ENCODE measurements at regions of chr11 and their contacts with region 1.

Region 1: GRCh38 chr11:68584097-68584496 is 100.2 kb upstream of the GAL start:
- DNase-seq: no peak
- H3K4me3 ChIP-seq: no peak overlapping the region
- H3K27me3 ChIP-seq: no peaks in the 10 kb centered on the region
- CTCF ChIP-seq: peak; percentile 55

Region 2: DNA sequence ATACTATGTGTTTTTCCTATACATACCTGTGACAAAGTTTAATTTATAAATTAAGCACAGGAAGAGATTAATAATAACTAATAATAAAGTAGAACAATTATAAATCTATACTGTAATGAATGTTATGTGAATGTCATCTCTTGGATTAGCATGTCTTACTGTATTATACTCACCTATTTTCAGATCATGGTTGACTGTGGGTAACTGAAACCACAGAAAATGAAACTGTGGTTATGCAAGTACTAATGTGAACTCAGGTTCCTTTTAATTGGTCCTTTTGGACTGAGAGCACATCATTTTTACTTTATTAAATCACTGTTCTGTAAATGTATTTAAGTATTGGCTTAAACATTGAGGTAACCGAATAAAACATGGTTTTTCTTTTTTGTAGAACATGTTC is 14.7 kb before region 1 on chr11:
- CTCF ChIA-PET with region 1: interaction called, 23 read pairs
- POLR2A ChIA-PET with region 1: no interaction called
- DNase-seq: no peak
- H3K4me3 ChIP-seq: no peak overlapping the region
- H3K27me3 ChIP-seq: no peaks in the 10 kb centered on the region
- CTCF ChIP-seq: no peak

Region 3: DNA sequence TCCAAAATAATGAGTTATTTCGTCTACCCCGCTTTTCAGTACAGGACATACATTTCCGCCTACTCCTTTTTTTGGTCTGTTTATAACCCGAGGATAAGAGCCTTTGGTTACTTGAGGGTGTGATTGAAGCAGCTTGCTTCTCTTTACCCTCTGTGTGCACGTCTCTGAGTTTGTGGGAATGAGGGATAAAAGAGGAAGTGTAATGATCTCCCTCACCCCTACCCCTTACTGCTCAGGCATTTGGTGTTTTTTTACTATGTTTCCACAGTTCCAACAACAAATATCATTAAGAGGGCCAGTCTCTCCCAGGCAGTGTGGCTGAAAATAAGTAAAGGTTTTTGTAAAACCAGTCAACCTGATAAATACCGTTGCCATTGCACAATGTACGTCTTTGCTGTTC is 17.1 kb after region 1 on chr11:
- CTCF ChIA-PET with region 1: interaction called, 13 read pairs
- POLR2A ChIA-PET with region 1: no interaction called
- DNase-seq: no peak
- H3K4me3 ChIP-seq: no peak overlapping the region
- H3K27me3 ChIP-seq: no peaks in the 10 kb centered on the region
- CTCF ChIP-seq: no peak

Region 4: DNA sequence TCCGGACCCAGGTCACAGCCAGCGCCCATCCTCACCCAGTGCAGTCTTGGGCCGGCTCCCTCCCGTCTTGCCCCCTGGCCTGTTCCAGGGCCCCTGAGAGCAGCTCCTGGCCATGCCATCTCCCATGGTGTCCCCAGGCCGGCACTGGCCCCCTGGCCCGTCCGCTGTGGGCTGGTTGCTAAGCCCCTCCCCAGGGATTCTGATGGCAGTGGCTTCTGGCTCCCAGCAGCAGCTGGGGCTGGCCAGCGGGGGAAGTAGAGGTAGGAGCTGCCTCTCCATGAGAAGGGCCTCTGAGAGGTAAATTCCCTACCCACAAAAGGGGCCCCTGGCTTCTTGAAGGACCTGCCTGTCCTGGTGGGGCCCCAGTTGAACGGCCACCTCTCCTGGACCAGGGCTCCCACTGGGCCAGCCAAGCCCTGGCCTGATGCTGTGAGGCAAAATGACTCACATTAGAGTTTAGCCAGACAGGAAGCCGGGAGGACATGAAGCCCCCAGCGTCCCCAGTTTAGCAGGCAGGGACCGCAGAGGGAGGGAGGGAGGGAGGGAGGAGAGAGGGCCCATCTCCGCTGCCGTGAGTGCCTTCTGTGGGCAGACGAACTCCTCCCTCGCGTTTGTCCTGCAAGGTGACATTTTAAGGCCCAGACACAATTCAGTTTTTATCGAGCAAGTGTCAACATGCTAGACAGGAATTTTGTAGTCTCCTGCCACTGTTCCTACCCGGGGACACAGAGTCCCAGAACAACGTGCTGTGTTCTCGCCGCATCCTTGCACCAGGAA is 67.3 kb after region 1 on chr11:
- CTCF ChIA-PET with region 1: no interaction called
- POLR2A ChIA-PET with region 1: no interaction called
- DNase-seq: no peak
- H3K4me3 ChIP-seq: no peak overlapping the region
- H3K27me3 ChIP-seq: peaks cover 17% of the 10 kb centered on the region
- CTCF ChIP-seq: no peak

Region 5: GRCh38 chr11:69343401-69344321 is 759.6 kb after region 1 on chr11:
- CTCF ChIA-PET with region 1: no interaction called
- POLR2A ChIA-PET with region 1: no interaction called
- DNase-seq: no peak
- H3K4me3 ChIP-seq: no peak overlapping the region
- H3K27me3 ChIP-seq: no peaks in the 10 kb centered on the region
- CTCF ChIP-seq: no peak